Common myeloid progenitor, CD34-positive (primary cell): ENCODE measurements at regions of chr17 and their contacts with region 1.

Region 1: DNA sequence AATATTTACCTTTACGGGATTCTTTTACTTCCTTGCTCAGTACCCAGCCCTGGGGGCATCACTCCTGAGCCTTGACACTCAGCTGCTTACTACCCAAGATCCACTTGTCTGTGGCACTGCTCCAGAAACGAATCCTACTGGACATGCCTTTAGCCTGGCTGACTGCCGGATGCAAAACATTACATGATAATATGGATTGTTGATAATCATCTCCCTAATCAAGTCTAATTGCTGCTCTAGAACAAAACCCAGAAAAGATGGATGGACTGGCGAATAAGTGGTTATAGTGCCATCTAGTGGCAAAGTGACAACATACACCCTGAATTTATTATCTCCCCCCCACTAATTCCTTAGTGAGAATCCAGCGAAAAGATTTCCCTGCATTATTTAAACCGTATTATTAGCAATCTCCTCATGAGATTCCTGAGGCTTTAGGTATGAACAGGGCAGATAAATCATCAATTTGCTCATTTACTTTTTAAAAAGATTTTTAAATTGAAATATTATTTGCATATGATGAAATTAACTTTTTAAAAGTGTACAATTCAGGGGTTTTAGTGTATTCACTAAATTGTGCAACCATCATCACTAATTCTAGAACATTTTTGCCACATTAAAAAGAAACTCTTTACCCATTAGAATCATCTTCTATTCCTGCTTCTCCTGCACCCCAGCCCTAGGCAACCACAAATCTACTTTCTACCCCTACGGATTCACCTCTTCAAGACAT is 61.6 kb downstream of the RGS9 start:
- DNase-seq: peak; percentile 67 to 78 (median 74)
- H3K4me3 ChIP-seq: no peak overlapping the region
- H3K27ac ChIP-seq: no peak overlapping the region
- H3K4me1 ChIP-seq: no peaks in the 10 kb centered on the region
- H3K27me3 ChIP-seq: peaks cover 0 to 14% (median 0%) of the 10 kb centered on the region in 5 experiments

Region 2: GRCh38 chr17:65181237-65182061 is 17.4 kb before region 1 on chr17:
- CTCF ChIA-PET with region 1: interaction called, 10 read pairs
- POLR2A ChIA-PET with region 1: no interaction called
- DNase-seq: peak in 2 of 3 donors; percentile 54 to 71
- H3K4me3 ChIP-seq: no peak overlapping the region
- H3K27ac ChIP-seq: no peak overlapping the region
- H3K4me1 ChIP-seq: peaks cover 6 to 16% (median 13%) of the 10 kb centered on the region in 4 experiments
- H3K27me3 ChIP-seq: no peaks in the 10 kb centered on the region

Region 3: DNA sequence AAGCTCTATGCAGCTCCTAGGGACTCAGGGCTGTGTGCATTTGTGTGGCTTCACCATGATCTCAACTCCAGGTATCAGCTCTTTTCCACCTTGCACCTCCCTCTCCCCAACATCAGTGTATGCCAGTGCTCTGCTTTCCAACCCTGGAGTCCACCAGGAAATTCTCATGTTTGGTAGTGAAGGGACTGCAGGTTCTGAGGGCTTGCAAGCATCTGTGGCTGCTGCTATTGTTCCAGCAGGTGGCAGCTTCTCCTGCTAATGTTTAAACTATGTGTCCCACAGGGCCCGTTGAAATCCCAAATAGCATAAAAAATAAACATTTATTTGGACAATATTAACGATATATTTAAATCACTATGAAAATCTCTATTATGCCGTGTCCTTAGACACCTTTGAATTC is 20.3 kb after region 1 on chr17:
- CTCF ChIA-PET with region 1: no interaction called
- POLR2A ChIA-PET with region 1: no interaction called
- DNase-seq: peak; percentile 25 to 42 (median 26)
- H3K4me3 ChIP-seq: no peak overlapping the region
- H3K27ac ChIP-seq: no peak overlapping the region
- H3K4me1 ChIP-seq: peaks cover 0 to 3% (median 0%) of the 10 kb centered on the region in 4 experiments
- H3K27me3 ChIP-seq: peaks cover 0 to 93% (median 52%) of the 10 kb centered on the region in 5 experiments